AG04450 (cell line): ENCODE measurements at regions of chr16 and their contacts with region 1.

Region 1: GRCh38 chr16:31142109-31143010 is 6.8 kb upstream of the PRSS8 start:
- DNase-seq: peak; percentile 96
- H3K4me3 ChIP-seq: peak overlapping the region; percentile 51
- H3K27ac ChIP-seq: peak overlapping the region; percentile 84
- H3K27me3 ChIP-seq: peaks cover 5% of the 10 kb centered on the region
- CTCF ChIP-seq: peak; percentile 87

Region 2: DNA sequence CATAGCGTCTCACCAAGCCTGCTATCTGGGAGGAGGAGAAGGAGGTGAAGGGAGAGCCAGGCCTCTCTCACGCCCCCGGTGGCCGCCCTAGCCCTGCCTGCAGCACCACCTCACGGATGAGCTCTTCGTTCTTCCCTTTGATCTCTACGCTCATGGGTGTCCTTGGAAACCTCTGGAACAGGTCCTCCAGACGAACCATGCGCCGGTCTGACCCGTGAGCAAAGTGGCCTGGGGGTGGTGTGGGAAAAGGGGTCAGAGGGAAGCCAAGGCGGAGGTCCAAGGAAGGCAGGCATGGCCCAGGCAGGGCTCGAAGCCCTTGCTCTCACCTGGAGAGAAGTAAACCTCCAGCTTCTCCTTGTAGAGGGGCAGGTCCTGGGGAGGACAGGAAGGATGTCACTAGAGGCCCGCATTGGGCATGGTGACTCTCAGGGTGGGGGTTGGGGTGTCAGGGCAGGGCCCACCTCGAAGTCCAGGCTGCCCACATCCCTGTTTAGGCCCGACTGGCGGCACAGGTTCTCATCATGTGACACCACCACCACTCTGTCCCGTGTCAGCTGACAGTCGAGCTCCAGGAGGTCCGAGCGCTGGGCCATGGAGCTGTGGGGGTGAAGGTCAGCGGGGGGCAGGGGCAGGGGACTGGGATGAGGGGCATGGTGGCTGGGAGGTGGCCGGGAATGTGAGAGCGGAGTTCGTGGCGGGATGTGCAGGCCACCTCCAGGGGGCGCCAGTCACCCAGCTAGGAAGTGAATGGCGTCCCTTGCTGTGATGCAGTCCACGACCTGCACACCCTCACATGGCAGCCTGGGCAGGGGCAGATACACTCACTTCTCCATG is 1029.9 kb before region 1 on chr16:
- CTCF ChIA-PET with region 1: no interaction called
- POLR2A ChIA-PET with region 1: no interaction called
- DNase-seq: no peak
- H3K4me3 ChIP-seq: no peak overlapping the region
- H3K27ac ChIP-seq: no peak overlapping the region
- H3K27me3 ChIP-seq: no peaks in the 10 kb centered on the region
- CTCF ChIP-seq: peak; percentile 63

Region 3: DNA sequence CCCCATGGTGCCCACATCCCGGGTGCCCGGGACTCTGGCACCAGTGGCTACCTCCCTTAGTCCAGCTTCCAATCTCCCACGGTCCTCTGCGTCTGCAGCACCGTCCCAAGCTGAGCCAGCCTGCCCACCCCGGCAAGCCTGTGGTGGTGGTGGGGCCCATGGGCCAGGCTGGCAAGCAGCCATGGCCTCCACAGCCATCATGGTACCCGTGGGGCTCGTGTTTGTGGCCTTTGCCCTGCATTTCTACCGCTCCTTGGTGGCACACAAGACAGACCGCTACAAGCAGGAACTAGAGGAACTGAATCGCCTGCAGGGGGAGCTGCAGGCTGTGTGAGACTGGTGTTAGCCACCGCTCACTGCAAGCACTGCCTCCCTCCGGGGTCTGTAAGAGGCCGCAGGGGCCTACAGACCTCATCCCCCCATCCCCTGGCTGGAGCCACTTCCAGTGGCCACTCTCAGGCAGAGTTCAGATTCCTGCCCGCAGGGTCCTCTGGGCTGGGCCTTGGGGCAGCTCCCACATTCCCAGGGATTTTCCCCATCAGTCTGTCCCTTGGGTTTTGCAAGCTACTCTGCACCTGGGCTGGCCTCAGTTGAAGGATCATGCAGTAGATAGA is 188.7 kb before region 1 on chr16:
- CTCF ChIA-PET with region 1: interaction called, 10 read pairs
- POLR2A ChIA-PET with region 1: interaction called, 5 read pairs
- DNase-seq: no peak
- H3K4me3 ChIP-seq: no peak overlapping the region
- H3K27ac ChIP-seq: no peak overlapping the region
- H3K27me3 ChIP-seq: no peaks in the 10 kb centered on the region
- CTCF ChIP-seq: peak; percentile 81

Region 4: DNA sequence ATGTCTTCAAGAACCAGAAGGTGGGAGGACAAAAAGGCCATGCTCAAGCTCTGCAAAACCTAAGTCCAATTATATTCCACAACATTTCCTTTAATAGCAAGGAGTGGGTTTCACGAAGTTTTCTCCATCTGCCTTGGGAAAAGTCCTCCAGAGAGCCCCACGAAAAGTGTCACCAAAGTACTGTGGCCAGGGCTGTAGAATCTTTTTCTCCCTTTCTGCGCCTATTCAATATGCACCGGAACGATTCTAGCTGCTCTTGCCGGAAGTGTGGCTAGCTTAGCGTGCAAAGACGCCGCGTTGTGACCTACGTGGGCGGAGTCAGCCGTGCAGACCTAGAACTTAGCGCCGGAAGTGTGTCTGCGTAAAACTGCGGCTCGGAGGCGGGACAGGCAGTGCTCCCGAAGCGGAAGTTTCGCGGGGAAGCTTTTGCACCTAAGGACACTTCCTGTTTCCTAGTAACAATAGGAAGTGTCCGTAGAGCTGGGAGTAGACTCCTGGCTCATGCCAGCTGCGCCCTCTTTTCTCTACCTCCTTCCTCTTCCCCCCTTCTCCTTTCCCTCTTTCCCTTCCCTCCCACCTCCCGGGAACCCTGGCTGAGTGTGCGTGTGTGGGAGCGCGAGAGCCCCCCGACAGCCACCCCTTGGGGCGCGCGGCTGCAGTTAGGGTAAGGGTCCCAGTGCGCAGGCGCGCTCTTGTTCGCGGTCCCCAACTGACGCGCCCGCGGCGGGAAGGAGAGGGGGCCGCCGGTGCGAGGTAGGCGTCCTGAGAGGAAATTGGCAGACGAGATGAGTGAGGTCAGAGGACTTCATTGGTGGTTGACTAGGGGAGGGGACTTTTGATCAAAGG is 68.2 kb before region 1 on chr16 and contains the starts of genes ZNF646 and ZNF668:
- CTCF ChIA-PET with region 1: interaction called, 9 read pairs
- POLR2A ChIA-PET with region 1: interaction called, 21 read pairs
- DNase-seq: peak; percentile 98
- H3K4me3 ChIP-seq: peak within 1 kb of the TSS; percentile 99
- H3K27ac ChIP-seq: peak within 1 kb of the TSS; percentile 96
- H3K27me3 ChIP-seq: no peaks in the 10 kb centered on the region
- CTCF ChIP-seq: 0 out of 2 replicates have a peak, but pooled peaks have one; percentile 1
- polyA plus RNA-seq, gene ZNF646: 2.4 and 4.5 TPM in 2 replicates
- polyA plus RNA-seq, gene ZNF668: 5.9 and 8.6 TPM in 2 replicates

Region 5: GRCh38 chr16:31117391-31118197 is 24.8 kb before region 1 on chr16 and contains the start of gene KAT8:
- CTCF ChIA-PET with region 1: interaction called, 23 read pairs
- POLR2A ChIA-PET with region 1: interaction called, 41 read pairs
- DNase-seq: peak; percentile 94
- H3K4me3 ChIP-seq: peak within 1 kb of the TSS; percentile 91
- H3K27ac ChIP-seq: peak within 1 kb of the TSS; percentile 96
- H3K27me3 ChIP-seq: no peaks in the 10 kb centered on the region
- CTCF ChIP-seq: no peak
- polyA plus RNA-seq, gene KAT8: 23.0 and 24.7 TPM in 2 replicates

Region 6: GRCh38 chr16:31157136-31157535 is 14.8 kb after region 1 on chr16:
- CTCF ChIA-PET with region 1: interaction called, 17 read pairs
- POLR2A ChIA-PET with region 1: no interaction called
- DNase-seq: no peak
- H3K4me3 ChIP-seq: no peak overlapping the region
- H3K27ac ChIP-seq: no peak overlapping the region
- H3K27me3 ChIP-seq: peaks cover 3% of the 10 kb centered on the region
- CTCF ChIP-seq: no peak

Region 7: GRCh38 chr16:31179747-31180459 is 37.5 kb after region 1 on chr16 and contains the start of gene FUS:
- CTCF ChIA-PET with region 1: interaction called, 16 read pairs
- POLR2A ChIA-PET with region 1: interaction called, 75 read pairs
- DNase-seq: peak; percentile 85
- H3K4me3 ChIP-seq: peak within 1 kb of the TSS; percentile 95
- H3K27ac ChIP-seq: peak within 1 kb of the TSS; percentile 91
- H3K27me3 ChIP-seq: no peaks in the 10 kb centered on the region
- CTCF ChIP-seq: no peak
- polyA plus RNA-seq, gene FUS: 156 and 166 TPM in 2 replicates

Region 8: GRCh38 chr16:31487720-31488467 is 345.5 kb after region 1 on chr16:
- CTCF ChIA-PET with region 1: no interaction called
- POLR2A ChIA-PET with region 1: no interaction called
- DNase-seq: no peak
- H3K4me3 ChIP-seq: peak overlapping the region; percentile 56
- H3K27ac ChIP-seq: no peak overlapping the region
- H3K27me3 ChIP-seq: peaks cover 28% of the 10 kb centered on the region
- CTCF ChIP-seq: no peak